ENCODE measurements at regions of chr7 and their contacts with region 1.

Region 1: GRCh38 chr7:144786522-144786921 is 49.3 kb downstream of the TPK1 start:
- DNase-seq: no peak
- ATAC-seq: peak; percentile 34
- H3K4me3 Mint-ChIP-seq: no peak overlapping the region
- H3K27ac Mint-ChIP-seq: no peak overlapping the region
- H3K4me1 Mint-ChIP-seq: peaks cover 4% of the 10 kb centered on the region
- H3K27me3 Mint-ChIP-seq: no peaks in the 10 kb centered on the region
- CTCF ChIP-seq: no peak

Region 2: DNA sequence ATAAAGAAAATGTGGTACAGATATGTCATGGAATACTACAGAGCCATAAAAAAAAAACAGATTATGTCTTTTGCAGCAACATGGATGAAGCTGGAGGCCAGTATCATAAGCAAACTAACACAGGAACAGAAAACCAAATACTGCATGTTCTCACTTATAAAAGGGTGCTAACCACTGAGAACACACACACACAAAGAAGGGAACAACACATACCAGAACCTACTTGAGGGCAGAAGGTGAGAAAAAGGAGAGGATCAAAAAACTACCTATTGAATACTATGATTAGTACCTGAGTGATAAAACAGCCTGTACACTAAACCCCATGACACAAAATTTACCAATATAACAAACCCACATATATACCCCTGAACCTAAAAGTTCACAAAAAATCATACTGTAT is 95.3 kb before region 1 on chr7:
- CTCF ChIA-PET with region 1: no interaction called
- POLR2A ChIA-PET with region 1: no interaction called
- intact Hi-C with region 1: no loop called
- DNase-seq: no peak
- ATAC-seq: no peak
- H3K4me3 Mint-ChIP-seq: no peak overlapping the region
- H3K27ac Mint-ChIP-seq: no peak overlapping the region
- H3K4me1 Mint-ChIP-seq: no peaks in the 10 kb centered on the region
- H3K27me3 Mint-ChIP-seq: no peaks in the 10 kb centered on the region
- CTCF ChIP-seq: no peak

Region 3: DNA sequence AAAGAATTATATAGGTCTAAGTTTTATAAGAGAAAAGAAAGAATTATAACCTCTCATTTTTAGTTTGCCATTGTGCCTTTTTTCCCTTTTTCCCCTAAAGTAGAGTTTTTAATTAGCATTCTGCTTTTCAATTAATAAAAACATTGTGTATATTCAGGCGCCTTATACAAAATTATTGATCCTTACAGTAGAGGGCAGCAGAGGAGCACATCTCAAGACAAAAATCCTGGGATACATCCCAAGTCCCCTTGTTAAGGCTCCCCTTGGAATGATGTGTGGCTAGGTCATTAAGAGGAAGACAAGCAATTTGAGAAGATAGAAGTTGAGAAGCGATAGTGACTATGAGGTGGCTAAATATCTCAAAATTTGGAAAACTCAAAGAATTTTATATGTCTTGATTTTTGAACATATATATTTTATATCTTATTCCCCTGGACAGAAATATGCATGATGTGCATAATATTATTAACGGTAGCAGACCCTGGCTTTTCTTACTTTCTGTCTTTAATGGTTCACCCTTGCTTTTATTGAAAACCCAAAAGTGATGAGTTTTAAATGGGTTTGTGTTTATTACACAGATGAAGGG is 68.4 kb after region 1 on chr7:
- CTCF ChIA-PET with region 1: interaction called, 3 read pairs
- POLR2A ChIA-PET with region 1: no interaction called
- intact Hi-C with region 1: loop called (anchors 5 kb)
- DNase-seq: no peak
- ATAC-seq: no peak
- H3K4me3 Mint-ChIP-seq: no peak overlapping the region
- H3K27ac Mint-ChIP-seq: no peak overlapping the region
- H3K4me1 Mint-ChIP-seq: no peaks in the 10 kb centered on the region
- H3K27me3 Mint-ChIP-seq: peaks cover 11% of the 10 kb centered on the region
- CTCF ChIP-seq: no peak